Activated CD4-positive, alpha-beta memory T cell treated with anti-CD3 and anti-CD28 coated beads, Interleukin-2, amount 10 ng/mL, durations not matched to agents 7 days and 5 days (primary cell): ENCODE measurements at regions of chr7 and their contacts with region 1.

Region 1: DNA sequence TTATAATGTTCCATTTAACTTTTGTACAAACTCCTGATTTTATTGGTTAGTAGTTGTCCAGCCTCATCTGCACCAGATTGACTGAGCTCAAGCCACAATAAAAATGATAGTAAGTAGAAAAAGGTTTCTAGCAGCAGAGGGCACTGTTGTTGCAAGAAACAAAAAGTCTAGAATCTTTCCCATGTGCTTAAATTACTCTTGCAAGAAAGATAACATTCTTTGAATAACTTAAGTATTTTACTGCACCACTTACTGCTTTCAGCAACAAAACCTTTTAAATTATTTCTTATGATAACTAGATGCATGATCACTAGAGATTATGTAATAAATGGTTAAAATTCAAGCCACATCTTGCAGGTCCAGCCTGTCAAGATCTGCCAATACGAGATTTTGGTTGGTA is 27.0 kb downstream of the LMOD2 start:
- DNase-seq: no peak
- H3K4me3 Mint-ChIP-seq: no peak overlapping the region
- H3K27ac Mint-ChIP-seq: no peak overlapping the region
- H3K4me1 Mint-ChIP-seq: no peaks in the 10 kb centered on the region
- H3K27me3 Mint-ChIP-seq: no peaks in the 10 kb centered on the region

Region 2: GRCh38 chr7:123705211-123705901 is 22.7 kb after region 1 on chr7:
- CTCF ChIA-PET with region 1: interaction called, 10 read pairs
- POLR2A ChIA-PET with region 1: no interaction called
- DNase-seq: no peak
- H3K4me3 Mint-ChIP-seq: no peak overlapping the region
- H3K27ac Mint-ChIP-seq: no peak overlapping the region
- H3K4me1 Mint-ChIP-seq: peaks cover 10% of the 10 kb centered on the region
- H3K27me3 Mint-ChIP-seq: no peaks in the 10 kb centered on the region

Region 3: GRCh38 chr7:123738356-123738755 is 55.7 kb after region 1 on chr7:
- CTCF ChIA-PET with region 1: no interaction called
- POLR2A ChIA-PET with region 1: no interaction called
- DNase-seq: no peak
- H3K4me3 Mint-ChIP-seq: no peak overlapping the region
- H3K27ac Mint-ChIP-seq: no peak overlapping the region
- H3K4me1 Mint-ChIP-seq: peaks cover 27% of the 10 kb centered on the region
- H3K27me3 Mint-ChIP-seq: no peaks in the 10 kb centered on the region

Region 4: GRCh38 chr7:123865517-123866117 is 182.9 kb after region 1 on chr7:
- CTCF ChIA-PET with region 1: interaction called, 30 read pairs
- POLR2A ChIA-PET with region 1: no interaction called
- DNase-seq: peak; percentile 39
- H3K4me3 Mint-ChIP-seq: no peak overlapping the region
- H3K27ac Mint-ChIP-seq: no peak overlapping the region
- H3K4me1 Mint-ChIP-seq: no peaks in the 10 kb centered on the region
- H3K27me3 Mint-ChIP-seq: peaks cover 7% of the 10 kb centered on the region

Region 5: GRCh38 chr7:123871998-123872867 is 189.5 kb after region 1 on chr7:
- CTCF ChIA-PET with region 1: interaction called, 12 read pairs
- POLR2A ChIA-PET with region 1: no interaction called
- DNase-seq: peak; percentile 27
- H3K4me3 Mint-ChIP-seq: no peak overlapping the region
- H3K27ac Mint-ChIP-seq: no peak overlapping the region
- H3K4me1 Mint-ChIP-seq: no peaks in the 10 kb centered on the region
- H3K27me3 Mint-ChIP-seq: peaks cover 15% of the 10 kb centered on the region